ENCODE measurements at regions of chr2 and their contacts with region 1.

Region 1: GRCh38 chr2:224472137-224472536 is 70.2 kb upstream of the FAM124B start:
- DNase-seq: no peak
- H3K4me3 Mint-ChIP-seq: no peak overlapping the region
- H3K27ac Mint-ChIP-seq: no peak overlapping the region
- H3K4me1 Mint-ChIP-seq: no peaks in the 10 kb centered on the region
- H3K27me3 Mint-ChIP-seq: no peaks in the 10 kb centered on the region

Region 2: GRCh38 chr2:224252631-224253030 is 219.5 kb before region 1 on chr2:
- CTCF ChIA-PET with region 1: no interaction called
- POLR2A ChIA-PET with region 1: no interaction called
- intact Hi-C with region 1: no loop called
- DNase-seq: no peak
- H3K4me3 Mint-ChIP-seq: no peak overlapping the region
- H3K27ac Mint-ChIP-seq: no peak overlapping the region
- H3K4me1 Mint-ChIP-seq: no peaks in the 10 kb centered on the region
- H3K27me3 Mint-ChIP-seq: peaks cover 17% of the 10 kb centered on the region

Region 3: DNA sequence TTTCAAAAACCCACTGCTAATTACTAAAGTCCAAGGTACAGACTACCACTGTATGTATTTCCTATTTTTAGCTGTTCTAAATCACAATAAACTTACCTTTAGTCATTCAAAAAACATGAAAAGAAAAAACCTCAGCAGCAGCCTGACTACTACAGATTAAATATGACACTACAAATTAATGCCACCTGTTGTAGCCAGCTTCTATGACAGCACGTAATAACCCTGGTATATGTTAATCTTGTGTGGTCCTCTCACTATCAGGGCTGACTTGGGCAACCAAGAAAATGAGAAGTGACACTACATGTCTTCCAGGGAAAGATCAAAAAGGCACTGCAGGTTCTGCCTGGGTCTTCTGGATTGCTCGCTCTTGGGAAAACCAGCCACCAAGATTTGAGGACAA is 20.4 kb after region 1 on chr2:
- CTCF ChIA-PET with region 1: no interaction called
- POLR2A ChIA-PET with region 1: no interaction called
- intact Hi-C with region 1: loop called (anchors 1 kb)
- DNase-seq: no peak
- H3K4me3 Mint-ChIP-seq: no peak overlapping the region
- H3K27ac Mint-ChIP-seq: no peak overlapping the region
- H3K4me1 Mint-ChIP-seq: peaks cover 39% of the 10 kb centered on the region
- H3K27me3 Mint-ChIP-seq: no peaks in the 10 kb centered on the region

Region 4: DNA sequence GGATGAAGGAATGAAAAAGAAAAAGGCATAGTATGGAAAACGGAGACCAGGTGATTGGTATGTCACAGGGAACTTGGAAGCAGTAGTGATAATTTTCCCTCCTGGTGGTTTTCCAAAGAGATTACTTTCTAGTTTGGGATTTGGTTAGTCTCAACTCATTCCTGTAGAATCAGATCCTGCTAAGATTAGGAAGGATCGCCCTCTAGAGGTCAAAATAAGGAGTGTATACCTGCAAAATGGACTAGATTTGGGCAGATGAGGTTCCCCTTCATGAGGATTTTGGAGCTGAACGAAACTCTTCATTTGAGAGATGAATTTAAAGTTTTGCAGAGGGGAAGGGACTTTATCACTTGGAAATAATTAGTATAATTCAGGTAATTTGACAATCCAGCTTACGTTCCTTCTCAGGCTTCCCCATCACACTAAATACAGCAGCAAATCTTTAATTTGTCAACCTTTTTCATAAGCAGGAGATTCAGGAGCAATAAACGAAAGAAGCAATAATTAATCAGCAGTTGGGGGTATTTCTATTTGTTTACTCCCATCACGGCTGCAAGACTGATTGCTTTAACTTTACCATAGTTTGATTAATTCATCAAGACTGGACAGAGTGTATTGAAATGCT is 178.8 kb after region 1 on chr2:
- CTCF ChIA-PET with region 1: interaction called, 7 read pairs
- POLR2A ChIA-PET with region 1: no interaction called
- intact Hi-C with region 1: loop called (anchors 5 kb)
- DNase-seq: no peak
- H3K4me3 Mint-ChIP-seq: no peak overlapping the region
- H3K27ac Mint-ChIP-seq: no peak overlapping the region
- H3K4me1 Mint-ChIP-seq: peaks cover 2% of the 10 kb centered on the region
- H3K27me3 Mint-ChIP-seq: peaks cover 1% of the 10 kb centered on the region

Region 5: DNA sequence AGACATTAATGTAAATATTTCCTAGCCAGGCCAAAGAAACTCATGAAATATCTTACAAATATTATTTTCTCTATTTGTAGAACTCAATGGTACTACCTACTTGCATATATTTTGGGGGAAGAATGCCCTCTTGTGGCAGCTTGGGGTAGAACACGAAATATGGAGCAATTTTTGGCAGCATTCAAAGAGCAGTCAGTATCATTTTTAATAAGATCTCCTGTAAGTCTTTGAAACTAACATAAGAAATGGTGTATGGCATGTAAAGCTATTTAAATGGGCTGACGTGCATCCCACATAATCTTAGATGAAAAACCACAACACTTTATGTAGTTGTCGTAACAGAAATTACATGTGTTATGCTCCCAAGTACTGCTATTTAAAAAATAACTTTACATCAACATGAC is 306.3 kb after region 1 on chr2:
- CTCF ChIA-PET with region 1: no interaction called
- POLR2A ChIA-PET with region 1: no interaction called
- intact Hi-C with region 1: no loop called
- DNase-seq: peak; percentile 76
- H3K4me3 Mint-ChIP-seq: no peak overlapping the region
- H3K27ac Mint-ChIP-seq: peak overlapping the region; percentile 33
- H3K4me1 Mint-ChIP-seq: peaks cover 3% of the 10 kb centered on the region
- H3K27me3 Mint-ChIP-seq: no peaks in the 10 kb centered on the region

Measured in activated CD4-positive, alpha-beta memory T cell treated with anti-CD3 and anti-CD28 coated beads for 36 hours (primary cell).